ENCODE measurements at regions of chr14 and their contacts with region 1.

Region 1: GRCh38 chr14:36070031-36070719 is 106.3 kb downstream of the PTCSC3 start:
- DNase-seq: peak; percentile 57 to 82
- ATAC-seq: peak; percentile 95 to 96
- H3K4me3 ChIP-seq: no peak overlapping the region
- H3K27ac ChIP-seq: no peak overlapping the region
- H3K4me1 ChIP-seq: peaks cover 16% of the 10 kb centered on the region
- CTCF ChIP-seq: peak; percentile 91
- EP300 ChIP-seq: no peak
- POLR2A ChIP-seq: no peak
- RAD21 ChIP-seq: peak; percentile 94 to 96

Region 2: DNA sequence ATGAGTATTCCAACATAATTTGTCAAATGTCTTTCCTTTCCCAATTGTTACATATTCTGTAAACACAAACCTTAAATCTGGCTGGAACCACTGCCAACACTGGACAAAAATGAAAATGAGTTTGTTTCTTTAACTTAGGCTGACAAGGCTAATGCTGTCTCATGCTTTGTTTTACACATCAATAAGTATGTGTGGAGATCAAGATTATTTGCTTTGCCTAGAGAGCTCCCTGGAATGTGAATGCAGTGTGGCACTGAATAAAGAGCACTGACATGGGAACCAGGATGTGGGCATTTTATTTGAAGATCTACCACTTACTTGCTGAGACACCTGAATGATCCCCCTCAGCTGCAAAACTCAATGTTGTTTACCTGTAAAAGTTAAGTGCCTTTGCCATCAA is 322.8 kb before region 1 on chr14:
- CTCF ChIA-PET with region 1: no interaction called
- POLR2A ChIA-PET with region 1: no interaction called
- DNase-seq: peak in 1 of 2 experiments; percentile 40
- ATAC-seq: peak in 1 of 2 experiments; percentile 66; a peak in 3 of 6 replicates
- H3K4me3 ChIP-seq: no peak overlapping the region
- H3K27ac ChIP-seq: no peak overlapping the region
- H3K4me1 ChIP-seq: peaks cover 9% of the 10 kb centered on the region; the same call in 2 of the 3 replicates
- CTCF ChIP-seq: no peak
- EP300 ChIP-seq: no peak
- POLR2A ChIP-seq: no peak
- RAD21 ChIP-seq: no peak

Region 3: DNA sequence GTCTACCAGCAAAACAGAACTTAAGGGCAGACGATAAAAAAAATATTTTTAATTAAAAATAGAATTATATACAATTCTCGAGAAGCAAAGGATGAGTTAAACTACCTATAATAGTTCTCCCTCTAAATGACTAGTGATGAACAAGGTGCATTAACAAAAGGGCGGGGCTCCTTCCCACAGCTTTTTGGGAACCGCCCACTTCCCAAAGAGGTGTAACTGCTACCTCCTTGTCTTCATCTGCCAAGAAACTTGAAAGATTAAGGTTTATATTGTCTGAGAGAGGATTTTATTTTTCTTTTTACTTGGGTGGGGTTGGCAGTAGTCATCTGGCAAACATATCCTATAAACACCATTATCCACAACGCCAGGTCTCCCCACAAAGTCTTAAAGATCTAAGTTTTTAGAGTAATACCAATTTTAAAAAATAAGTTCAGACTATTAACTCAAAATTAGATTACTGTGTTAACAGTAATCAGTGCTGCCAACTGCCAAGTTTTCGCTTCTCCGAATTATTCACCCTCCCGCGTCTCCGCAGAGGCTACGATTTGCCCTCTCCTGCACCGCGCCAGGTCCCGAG is 262.0 kb before region 1 on chr14:
- CTCF ChIA-PET with region 1: no interaction called
- POLR2A ChIA-PET with region 1: no interaction called
- DNase-seq: peak in 1 of 2 experiments; percentile 31
- ATAC-seq: peak; percentile 20 to 33; a peak in 2 of 6 replicates
- H3K4me3 ChIP-seq: peak overlapping the region; percentile 84
- H3K27ac ChIP-seq: peak overlapping the region; percentile 86 to 92
- H3K4me1 ChIP-seq: peaks cover 18% of the 10 kb centered on the region
- CTCF ChIP-seq: no peak
- EP300 ChIP-seq: no peak
- POLR2A ChIP-seq: no peak
- RAD21 ChIP-seq: no peak

Region 4: GRCh38 chr14:35959835-35960234 is 110.3 kb before region 1 on chr14:
- CTCF ChIA-PET with region 1: interaction called, 10 read pairs
- POLR2A ChIA-PET with region 1: no interaction called
- DNase-seq: peak in 1 of 2 experiments; percentile 35
- ATAC-seq: peak; percentile 49 to 54; a peak in 2 of 6 replicates
- H3K4me3 ChIP-seq: no peak overlapping the region
- H3K27ac ChIP-seq: no peak overlapping the region
- H3K4me1 ChIP-seq: peaks cover 12% of the 10 kb centered on the region; the same call in 2 of the 3 replicates
- CTCF ChIP-seq: peak; percentile 44
- EP300 ChIP-seq: no peak
- POLR2A ChIP-seq: no peak
- RAD21 ChIP-seq: peak; percentile 50 to 57; a peak in 4 of 5 replicates

Region 5: GRCh38 chr14:36091096-36091495 is 20.9 kb after region 1 on chr14:
- CTCF ChIA-PET with region 1: interaction called, 19 read pairs
- POLR2A ChIA-PET with region 1: no interaction called
- DNase-seq: peak; percentile 89 to 96
- ATAC-seq: peak; percentile 99 to 100
- H3K4me3 ChIP-seq: no peak overlapping the region
- H3K27ac ChIP-seq: peak overlapping the region; percentile 75 to 82
- H3K4me1 ChIP-seq: peaks cover 24% of the 10 kb centered on the region
- CTCF ChIP-seq: no peak
- EP300 ChIP-seq: no peak
- POLR2A ChIP-seq: no peak
- RAD21 ChIP-seq: peak in 1 of 2 experiments; percentile 26; a peak in 2 of 5 replicates

Region 6: GRCh38 chr14:36207500-36207899 is 137.3 kb after region 1 on chr14:
- CTCF ChIA-PET with region 1: interaction called, 10 read pairs
- POLR2A ChIA-PET with region 1: no interaction called
- DNase-seq: peak in 1 of 2 experiments; percentile 12
- ATAC-seq: peak; percentile 57 to 59; a peak in 3 of 6 replicates
- H3K4me3 ChIP-seq: no peak overlapping the region
- H3K27ac ChIP-seq: no peak overlapping the region
- H3K4me1 ChIP-seq: no peaks in the 10 kb centered on the region
- CTCF ChIP-seq: peak; percentile 46
- EP300 ChIP-seq: no peak
- POLR2A ChIP-seq: no peak
- RAD21 ChIP-seq: peak in 1 of 2 experiments; percentile 45; a peak in 3 of 5 replicates

Region 7: GRCh38 chr14:36320200-36320896 is 250.2 kb after region 1 on chr14 and contains the start of gene MBIP:
- CTCF ChIA-PET with region 1: interaction called, 21 read pairs
- POLR2A ChIA-PET with region 1: interaction called, 4 read pairs
- DNase-seq: peak; percentile 95 to 98
- ATAC-seq: peak; percentile 98 to 99
- H3K4me3 ChIP-seq: peak within 1 kb of the TSS; percentile 68
- H3K27ac ChIP-seq: peak within 1 kb of the TSS; percentile 80 to 90
- H3K4me1 ChIP-seq: peaks cover 23% of the 10 kb centered on the region
- CTCF ChIP-seq: no peak
- EP300 ChIP-seq: no peak
- POLR2A ChIP-seq: peak; percentile 47
- RAD21 ChIP-seq: no peak
- polyA plus RNA-seq, gene MBIP: 24.3 and 33.1 TPM in 2 replicates

Region 8: GRCh38 chr14:36383674-36384431 is 313.7 kb after region 1 on chr14:
- CTCF ChIA-PET with region 1: interaction called, 105 read pairs
- POLR2A ChIA-PET with region 1: no interaction called
- DNase-seq: no peak
- ATAC-seq: no peak
- H3K4me3 ChIP-seq: no peak overlapping the region
- H3K27ac ChIP-seq: no peak overlapping the region
- H3K4me1 ChIP-seq: no peaks in the 10 kb centered on the region
- CTCF ChIP-seq: no peak
- EP300 ChIP-seq: no peak
- POLR2A ChIP-seq: no peak
- RAD21 ChIP-seq: no peak

Region 9: DNA sequence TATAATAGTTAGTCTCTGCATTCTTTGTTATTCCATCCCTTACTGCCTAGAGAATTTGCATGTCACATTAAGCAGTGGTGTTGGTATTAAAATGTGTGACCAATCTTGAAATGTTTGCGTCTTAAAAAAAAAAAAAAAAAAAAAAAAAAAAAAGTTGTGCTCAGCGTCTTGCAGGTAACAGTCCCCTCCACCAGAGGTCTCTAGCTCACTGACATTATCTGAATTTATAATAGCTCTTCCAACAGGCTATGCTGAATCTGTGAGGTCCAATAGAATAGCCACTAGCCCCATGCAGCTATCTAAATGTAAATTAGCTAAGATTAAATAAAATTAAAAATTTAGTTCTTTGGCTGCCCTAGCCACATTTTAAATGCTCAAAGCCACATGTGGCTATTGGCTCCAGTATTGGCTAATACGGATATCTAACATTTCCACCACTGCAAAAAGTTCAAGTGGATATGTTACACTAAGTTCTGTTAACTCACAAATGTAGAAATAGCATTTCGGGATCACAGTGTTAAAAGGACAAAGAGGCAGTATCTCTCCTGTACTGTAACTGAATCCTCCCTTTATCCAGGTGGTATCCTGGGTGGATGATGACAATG is 483.6 kb after region 1 on chr14:
- CTCF ChIA-PET with region 1: interaction called, 26 read pairs
- POLR2A ChIA-PET with region 1: no interaction called
- DNase-seq: peak; percentile 29 to 64
- ATAC-seq: peak; percentile 68 to 86; a peak in 4 of 6 replicates
- H3K4me3 ChIP-seq: no peak overlapping the region
- H3K27ac ChIP-seq: no peak overlapping the region
- H3K4me1 ChIP-seq: no peaks in the 10 kb centered on the region
- CTCF ChIP-seq: peak; percentile 81
- EP300 ChIP-seq: no peak
- POLR2A ChIP-seq: no peak
- RAD21 ChIP-seq: peak; percentile 63 to 65